Activated naive CD4-positive, alpha-beta T cell treated with anti-CD3 and anti-CD28 coated beads for 36 hours (primary cell): ENCODE measurements at regions of chr2 and their contacts with region 1.

Region 1: GRCh38 chr2:196263181-196263747 is 91.9 kb upstream of the STK17B start:
- DNase-seq: peak; percentile 61
- H3K4me3 Mint-ChIP-seq: peak overlapping the region; percentile 70
- H3K27ac Mint-ChIP-seq: peak overlapping the region; percentile 97
- H3K4me1 Mint-ChIP-seq: peaks cover 80% of the 10 kb centered on the region
- H3K27me3 Mint-ChIP-seq: no peaks in the 10 kb centered on the region

Region 2: GRCh38 chr2:195049372-195050031 is 1213.8 kb before region 1 on chr2:
- CTCF ChIA-PET with region 1: no interaction called
- intact Hi-C with region 1: no loop called
- DNase-seq: no peak
- H3K4me3 Mint-ChIP-seq: no peak overlapping the region
- H3K27ac Mint-ChIP-seq: no peak overlapping the region
- H3K4me1 Mint-ChIP-seq: peaks cover 4% of the 10 kb centered on the region
- H3K27me3 Mint-ChIP-seq: no peaks in the 10 kb centered on the region

Region 3: DNA sequence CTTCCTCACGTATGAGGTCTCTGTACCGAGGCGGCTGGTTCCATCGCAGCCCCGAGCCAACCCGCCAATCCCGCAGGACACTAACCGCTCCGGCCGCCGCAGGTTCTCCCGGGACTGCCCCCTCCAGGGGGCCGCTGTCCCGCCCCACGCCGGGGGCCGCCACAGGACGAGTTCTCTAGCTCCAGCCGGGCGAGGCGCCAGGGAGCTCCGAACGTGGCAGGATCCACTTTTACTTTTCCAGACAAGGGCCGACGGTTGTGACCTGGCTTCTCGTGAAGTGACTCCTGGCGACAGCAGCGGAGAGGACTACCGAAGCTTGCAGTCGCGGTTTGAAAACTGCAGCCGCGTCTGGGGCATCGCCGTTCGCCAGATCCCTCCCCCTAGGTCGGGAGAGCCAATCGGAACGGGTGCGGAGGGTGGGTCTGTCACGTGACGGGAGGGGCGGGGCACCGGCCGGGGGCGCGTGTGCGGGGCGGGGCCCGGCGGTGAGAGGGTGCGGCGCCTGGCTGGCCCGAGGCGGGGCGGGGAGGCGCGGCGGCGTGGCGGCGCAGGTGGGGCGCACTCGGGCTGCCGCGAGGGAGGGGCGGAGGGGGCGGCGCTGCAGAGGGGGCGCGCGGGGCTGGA is 91.9 kb before region 1 on chr2 and contains the start of gene STK17B:
- CTCF ChIA-PET with region 1: interaction called, 7 read pairs
- intact Hi-C with region 1: loop called (anchors 1 kb)
- DNase-seq: peak; percentile 98
- H3K4me3 Mint-ChIP-seq: peak within 1 kb of the TSS; percentile 93
- H3K27ac Mint-ChIP-seq: peak within 1 kb of the TSS; percentile 92
- H3K4me1 Mint-ChIP-seq: peaks cover 34% of the 10 kb centered on the region
- H3K27me3 Mint-ChIP-seq: no peaks in the 10 kb centered on the region
- total RNA-seq, gene STK17B: 141 to 143 TPM

Region 4: DNA sequence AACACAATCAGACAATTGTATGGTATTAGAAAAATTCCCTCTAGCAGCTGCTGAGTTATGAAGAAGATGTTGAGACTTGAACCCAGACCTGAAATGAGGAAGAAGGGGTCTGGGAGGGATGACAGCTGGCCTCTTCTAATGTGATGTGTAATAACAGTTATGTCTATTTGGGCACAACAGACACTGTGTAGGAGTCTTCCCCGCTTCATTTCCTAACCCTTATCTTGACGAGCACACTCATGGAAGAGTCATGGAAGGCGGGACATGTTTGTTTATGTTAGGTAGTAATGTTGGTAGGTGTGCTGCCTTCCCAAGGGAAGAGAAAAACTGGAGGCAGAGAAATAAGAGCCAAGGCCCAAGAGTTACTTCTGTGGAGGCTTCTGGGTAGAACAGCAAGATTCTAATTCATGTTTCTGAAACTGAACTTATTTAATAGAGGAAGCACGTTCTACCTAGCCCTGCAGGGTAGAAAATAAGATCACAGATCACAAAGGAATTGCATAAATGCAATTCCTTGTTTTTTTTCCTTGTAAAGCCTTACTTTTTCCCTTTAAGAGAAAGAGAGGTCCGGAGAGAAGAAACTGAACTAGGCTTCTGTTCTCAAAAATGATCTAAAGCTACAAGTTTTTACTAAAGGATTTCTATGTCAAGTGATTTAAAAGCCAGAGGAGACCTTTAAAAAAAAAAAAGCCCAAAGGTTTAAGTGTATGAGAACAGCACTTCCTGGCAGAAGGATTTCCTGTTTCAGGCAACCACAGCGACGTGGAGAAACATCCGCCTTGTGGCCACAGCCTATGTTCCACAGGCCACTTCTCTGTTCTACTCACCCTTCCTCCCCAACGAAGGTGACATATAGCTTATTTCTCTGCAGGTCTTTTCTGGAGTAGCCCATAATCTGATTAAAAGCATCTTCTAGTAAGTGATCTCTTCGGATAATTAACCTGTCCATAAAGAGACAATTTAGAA is 23.4 kb before region 1 on chr2:
- CTCF ChIA-PET with region 1: interaction called, 22 read pairs
- intact Hi-C with region 1: loop called (anchors 1 kb)
- DNase-seq: peak; percentile 93
- H3K4me3 Mint-ChIP-seq: peak overlapping the region; percentile 49
- H3K27ac Mint-ChIP-seq: peak overlapping the region; percentile 88
- H3K4me1 Mint-ChIP-seq: peaks cover 85% of the 10 kb centered on the region
- H3K27me3 Mint-ChIP-seq: no peaks in the 10 kb centered on the region

Region 5: DNA sequence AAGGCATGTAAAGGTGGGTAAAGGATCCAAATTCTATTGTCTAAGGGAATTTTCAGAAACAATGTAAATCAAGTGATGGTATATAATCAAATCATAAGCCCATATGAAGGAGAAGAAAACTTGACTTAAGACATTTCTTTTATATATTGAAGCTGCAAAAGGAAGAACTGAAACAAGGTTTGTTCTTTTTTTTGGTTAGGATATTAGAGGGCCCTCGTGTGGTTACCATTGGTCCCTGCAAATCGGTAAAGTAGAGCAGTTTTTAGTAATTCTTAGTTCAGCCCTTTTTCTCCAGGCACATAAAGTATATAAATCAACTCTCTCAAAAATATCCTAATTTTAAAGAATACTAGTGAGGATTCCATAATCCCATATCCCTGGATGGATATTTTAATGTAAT is 13.7 kb after region 1 on chr2:
- CTCF ChIA-PET with region 1: interaction called, 40 read pairs
- intact Hi-C with region 1: no loop called
- DNase-seq: peak; percentile 57
- H3K4me3 Mint-ChIP-seq: no peak overlapping the region
- H3K27ac Mint-ChIP-seq: no peak overlapping the region
- H3K4me1 Mint-ChIP-seq: peaks cover 59% of the 10 kb centered on the region
- H3K27me3 Mint-ChIP-seq: no peaks in the 10 kb centered on the region

Region 6: DNA sequence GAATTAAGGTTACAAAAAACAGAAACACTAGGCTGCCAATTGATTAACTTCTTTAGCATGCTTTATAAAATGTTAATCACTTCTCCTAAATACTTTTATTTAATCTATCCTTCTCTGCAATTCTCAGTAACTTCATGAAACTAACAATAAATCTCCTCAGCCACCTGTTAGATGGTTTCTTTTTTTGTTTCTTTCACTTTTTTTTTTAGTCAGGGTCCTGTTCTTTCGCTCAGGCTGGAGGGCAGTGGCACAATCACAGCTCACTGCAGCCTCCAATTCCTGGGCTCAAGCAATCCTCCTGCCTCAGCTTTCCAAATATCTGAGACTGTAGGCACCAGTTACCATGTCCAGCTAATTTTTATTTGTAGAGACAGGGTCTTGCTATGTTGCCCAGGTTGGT is 121.5 kb after region 1 on chr2:
- CTCF ChIA-PET with region 1: no interaction called
- intact Hi-C with region 1: no loop called
- DNase-seq: no peak
- H3K4me3 Mint-ChIP-seq: no peak overlapping the region
- H3K27ac Mint-ChIP-seq: no peak overlapping the region
- H3K4me1 Mint-ChIP-seq: no peaks in the 10 kb centered on the region
- H3K27me3 Mint-ChIP-seq: no peaks in the 10 kb centered on the region

Region 7: DNA sequence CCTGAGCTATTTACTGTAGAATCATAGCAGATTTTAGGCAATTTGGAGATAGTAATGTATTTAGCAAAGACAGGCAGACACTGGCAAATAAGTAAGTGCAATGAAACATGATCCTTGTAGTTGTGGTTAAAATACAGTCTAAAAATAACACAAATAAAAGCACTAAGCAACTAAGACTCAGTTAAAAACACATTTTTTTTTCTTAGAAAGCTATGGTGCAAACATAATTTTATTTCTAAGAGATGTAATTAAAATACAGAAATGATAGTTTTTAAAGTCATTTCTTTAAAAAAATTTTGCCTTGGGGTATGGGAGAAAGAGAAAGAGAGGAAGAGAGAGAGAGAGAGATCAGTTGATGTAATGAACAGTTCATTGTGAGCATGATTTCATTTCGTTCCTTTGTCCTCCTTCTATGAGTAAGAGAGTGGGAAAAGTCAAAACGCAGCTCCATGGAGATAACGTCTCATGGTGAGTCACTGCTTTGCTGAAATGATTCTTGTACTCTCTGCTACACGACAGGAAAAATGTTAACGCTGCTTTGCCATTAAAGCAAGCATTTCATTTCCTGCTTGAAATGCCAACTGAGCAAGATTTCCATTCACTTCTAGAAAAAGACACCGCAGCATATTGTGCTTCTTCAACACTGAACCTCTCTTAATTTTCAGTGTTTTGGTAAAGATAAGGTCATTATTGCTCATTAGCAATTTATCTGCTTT is 724.5 kb after region 1 on chr2:
- CTCF ChIA-PET with region 1: no interaction called
- intact Hi-C with region 1: loop called (anchors 10 kb)
- DNase-seq: peak; percentile 76
- H3K4me3 Mint-ChIP-seq: peak overlapping the region; percentile 17
- H3K27ac Mint-ChIP-seq: peak overlapping the region; percentile 98
- H3K4me1 Mint-ChIP-seq: peaks cover 78% of the 10 kb centered on the region
- H3K27me3 Mint-ChIP-seq: no peaks in the 10 kb centered on the region

Region 8: GRCh38 chr2:197293252-197294007 is 1030.2 kb after region 1 on chr2:
- CTCF ChIA-PET with region 1: no interaction called
- intact Hi-C with region 1: loop called (anchors 5 kb)
- DNase-seq: peak; percentile 48
- H3K4me3 Mint-ChIP-seq: peak overlapping the region; percentile 57
- H3K27ac Mint-ChIP-seq: peak overlapping the region; percentile 92
- H3K4me1 Mint-ChIP-seq: peaks cover 87% of the 10 kb centered on the region
- H3K27me3 Mint-ChIP-seq: no peaks in the 10 kb centered on the region